Tibial artery (tissue), 4 donors: ENCODE measurements at regions of chr2 and their contacts with region 1.

Region 1: GRCh38 chr2:79573895-79574674 is 61.2 kb downstream of the CTNNA2 start:
- DNase-seq: no peak
- H3K4me3 ChIP-seq: no peak overlapping the region
- H3K27ac ChIP-seq: no peak overlapping the region
- H3K4me1 ChIP-seq: no peaks in the 10 kb centered on the region
- H3K27me3 ChIP-seq: no peaks in the 10 kb centered on the region
- CTCF ChIP-seq: no peak

Region 2: DNA sequence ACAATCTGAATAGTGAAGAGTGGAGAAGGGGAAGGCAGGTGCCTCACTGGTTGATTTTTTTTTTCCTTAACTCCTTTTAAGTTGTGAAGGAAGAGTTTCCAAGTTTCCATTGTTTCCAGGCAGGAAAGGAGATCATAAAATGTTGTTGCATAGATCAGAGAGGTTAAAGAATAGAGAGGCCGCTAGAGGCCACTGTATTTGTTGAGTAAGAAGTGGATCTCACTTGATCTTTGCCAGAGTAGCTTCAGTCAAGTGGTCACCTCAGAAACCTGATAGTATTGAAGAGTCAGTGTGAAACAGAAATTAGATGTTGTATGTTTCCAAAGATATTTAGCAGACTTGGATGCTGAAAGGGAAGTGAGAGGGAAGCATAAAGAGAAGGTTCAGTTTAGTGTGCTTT is 43.6 kb before region 1 on chr2:
- intact Hi-C with region 1: loop called (anchors 2 kb)
- DNase-seq: no peak
- H3K4me3 ChIP-seq: no peak overlapping the region
- H3K27ac ChIP-seq: no peak overlapping the region
- H3K4me1 ChIP-seq: no peaks in the 10 kb centered on the region
- H3K27me3 ChIP-seq: no peaks in the 10 kb centered on the region
- CTCF ChIP-seq: no peak